AG04450 (cell line): ENCODE measurements at regions of chr18 and their contacts with region 1.

Region 1: DNA sequence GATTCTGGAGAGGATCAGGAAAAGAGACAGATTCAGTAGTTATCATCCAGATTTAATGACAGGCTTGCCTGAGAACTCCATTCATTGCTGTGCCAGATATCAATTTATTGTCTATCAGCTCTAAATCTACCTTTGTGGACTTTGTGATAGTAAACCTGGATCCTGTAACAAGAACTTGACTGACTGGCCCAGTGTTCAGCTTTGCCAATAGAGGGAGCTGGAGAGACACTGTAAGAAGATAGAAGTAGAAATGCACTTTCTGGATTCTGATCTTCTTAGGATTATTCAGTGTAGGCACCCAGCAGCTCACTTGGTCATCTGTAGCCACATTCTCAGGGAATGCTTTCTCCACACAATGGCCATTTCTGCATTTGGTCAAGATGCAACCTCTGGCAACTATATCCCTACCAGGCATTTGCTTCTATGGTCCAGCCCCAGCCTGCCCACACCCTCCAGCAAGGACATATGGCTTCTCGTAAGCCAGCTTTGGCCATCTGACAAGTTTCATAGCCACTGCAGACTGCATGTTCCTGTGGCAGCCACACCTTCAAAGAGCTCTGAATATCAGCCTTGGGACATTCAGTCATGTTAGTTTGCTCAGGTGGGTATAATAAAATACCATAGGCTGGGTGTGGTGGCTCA is 6.1 kb upstream of the SERPINB8 start:
- DNase-seq: peak; percentile 45
- H3K4me3 ChIP-seq: no peak overlapping the region
- H3K27ac ChIP-seq: no peak overlapping the region
- H3K27me3 ChIP-seq: peaks cover 5% of the 10 kb centered on the region
- CTCF ChIP-seq: peak; percentile 98

Region 2: GRCh38 chr18:63924551-63924950 is 39.2 kb before region 1 on chr18:
- CTCF ChIA-PET with region 1: interaction called, 11 read pairs
- POLR2A ChIA-PET with region 1: no interaction called
- DNase-seq: no peak
- H3K4me3 ChIP-seq: no peak overlapping the region
- H3K27ac ChIP-seq: no peak overlapping the region
- H3K27me3 ChIP-seq: no peaks in the 10 kb centered on the region
- CTCF ChIP-seq: no peak

Region 3: DNA sequence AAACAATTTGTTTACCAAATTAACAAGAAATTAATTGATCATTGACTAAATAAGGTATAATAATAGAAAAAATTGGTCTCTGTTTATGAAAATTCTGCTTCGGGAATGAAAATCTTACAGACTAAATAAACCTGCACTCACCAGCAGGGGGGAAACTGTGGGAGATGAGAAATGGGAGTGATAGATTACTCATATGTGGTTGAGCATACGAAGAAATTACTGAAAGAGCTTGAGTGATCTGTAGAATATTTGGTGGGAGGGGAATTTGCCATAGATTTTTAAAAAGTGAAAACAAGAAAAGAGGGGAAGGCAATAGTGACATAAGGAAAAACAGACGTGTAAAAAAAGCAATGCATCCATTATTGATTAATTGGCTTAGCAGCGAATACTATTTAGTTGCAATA is 12.4 kb before region 1 on chr18:
- CTCF ChIA-PET with region 1: interaction called, 58 read pairs
- POLR2A ChIA-PET with region 1: no interaction called
- DNase-seq: no peak
- H3K4me3 ChIP-seq: no peak overlapping the region
- H3K27ac ChIP-seq: no peak overlapping the region
- H3K27me3 ChIP-seq: no peaks in the 10 kb centered on the region
- CTCF ChIP-seq: peak; percentile 42

Region 4: DNA sequence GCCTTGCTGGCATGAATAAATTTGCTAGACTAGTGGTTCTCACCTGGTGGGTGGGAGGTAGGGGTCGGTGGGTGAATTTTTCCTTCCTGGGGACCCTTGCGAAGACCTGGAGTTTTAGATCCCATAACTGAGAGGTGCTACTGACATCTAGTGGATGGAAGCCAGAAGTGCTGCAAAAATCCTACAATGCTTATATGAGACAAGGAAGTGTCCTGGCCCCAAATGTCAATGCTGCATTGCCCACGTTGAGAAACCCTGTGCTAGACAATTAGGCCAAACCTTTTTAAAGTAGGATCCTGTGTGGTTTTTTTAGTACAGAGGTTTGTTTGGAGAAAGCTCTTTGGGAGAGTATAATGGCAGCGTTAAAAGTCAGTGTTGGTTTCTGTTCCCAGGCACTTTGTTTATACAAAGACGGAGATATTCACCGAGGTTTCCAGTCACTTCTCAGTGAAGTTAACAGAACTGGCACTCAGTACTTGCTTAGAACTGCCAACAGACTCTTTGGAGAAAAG is 15.7 kb after region 1 on chr18:
- CTCF ChIA-PET with region 1: interaction called, 57 read pairs
- POLR2A ChIA-PET with region 1: no interaction called
- DNase-seq: peak; percentile 21
- H3K4me3 ChIP-seq: peak overlapping the region; percentile 48
- H3K27ac ChIP-seq: no peak overlapping the region
- H3K27me3 ChIP-seq: no peaks in the 10 kb centered on the region
- CTCF ChIP-seq: peak; percentile 78

Region 5: DNA sequence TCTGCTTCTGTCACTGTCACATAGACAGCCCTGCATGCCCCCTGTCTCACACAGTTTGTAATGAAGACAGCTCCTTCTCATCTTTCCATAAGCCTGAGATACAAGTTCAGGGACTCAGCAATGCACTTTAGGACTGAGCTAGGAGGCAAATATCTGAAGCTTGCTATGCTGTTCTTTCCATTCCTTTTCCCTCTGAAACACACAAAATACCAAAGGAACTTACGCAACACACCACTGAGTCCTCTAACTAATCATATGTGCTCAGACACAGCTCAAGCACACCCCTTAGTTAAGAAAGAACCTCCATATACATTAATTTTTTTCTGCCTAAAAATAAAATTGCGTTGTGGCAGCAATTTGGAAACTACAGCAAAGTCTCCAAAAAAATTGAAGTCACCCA is 24.0 kb after region 1 on chr18:
- CTCF ChIA-PET with region 1: interaction called, 21 read pairs
- POLR2A ChIA-PET with region 1: no interaction called
- DNase-seq: no peak
- H3K4me3 ChIP-seq: no peak overlapping the region
- H3K27ac ChIP-seq: no peak overlapping the region
- H3K27me3 ChIP-seq: no peaks in the 10 kb centered on the region
- CTCF ChIP-seq: no peak

Region 6: GRCh38 chr18:64185987-64186386 is 222.3 kb after region 1 on chr18:
- CTCF ChIA-PET with region 1: no interaction called
- POLR2A ChIA-PET with region 1: no interaction called
- DNase-seq: no peak
- H3K4me3 ChIP-seq: no peak overlapping the region
- H3K27ac ChIP-seq: no peak overlapping the region
- H3K27me3 ChIP-seq: no peaks in the 10 kb centered on the region
- CTCF ChIP-seq: no peak